ENCODE measurements at regions of chr3 and their contacts with region 1.

Region 1: GRCh38 chr3:61466357-61466756 is 95.0 kb upstream of the PTPRG start:
- DNase-seq: peak in 1 of 2 donors; percentile 41
- ATAC-seq: peak; percentile 71 to 95 (median 90)
- H3K4me3 ChIP-seq: no peak overlapping the region
- H3K27ac ChIP-seq: no peak overlapping the region
- H3K4me1 ChIP-seq: peaks cover 0 to 17% (median 0%) of the 10 kb centered on the region in 9 donors
- H3K27me3 ChIP-seq: no peaks in the 10 kb centered on the region
- CTCF ChIP-seq: no peak

Region 2: GRCh38 chr3:61168301-61168700 is 298.1 kb before region 1 on chr3:
- intact Hi-C with region 1: no loop called
- DNase-seq: no peak
- ATAC-seq: no peak
- H3K4me3 ChIP-seq: no peak overlapping the region
- H3K27ac ChIP-seq: no peak overlapping the region
- H3K4me1 ChIP-seq: peaks cover 0 to 7% (median 0%) of the 10 kb centered on the region in 9 donors
- H3K27me3 ChIP-seq: no peaks in the 10 kb centered on the region
- CTCF ChIP-seq: no peak

Region 3: DNA sequence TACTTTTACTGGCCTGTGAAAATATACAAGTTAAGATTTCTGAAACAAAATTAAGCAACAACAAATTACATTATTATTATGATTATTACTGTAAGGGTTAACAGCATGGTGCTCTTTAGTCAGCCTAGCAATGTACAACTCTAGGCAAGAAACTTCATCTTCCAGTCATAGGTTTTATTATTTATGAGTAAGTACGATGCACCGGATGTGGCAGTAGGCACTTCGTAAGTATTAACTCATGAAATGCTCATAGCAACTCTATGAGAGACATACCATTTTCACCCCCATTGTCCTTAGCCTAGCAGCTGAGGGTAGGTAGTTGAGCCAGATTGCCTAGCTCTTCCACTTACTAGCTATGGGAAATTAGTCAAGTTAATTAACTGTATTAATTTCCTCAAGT is 27.0 kb after region 1 on chr3:
- intact Hi-C with region 1: loop called in 1 of 10 experiments (anchors 2 kb)
- DNase-seq: no peak
- ATAC-seq: no peak
- H3K4me3 ChIP-seq: no peak overlapping the region
- H3K27ac ChIP-seq: no peak overlapping the region
- H3K4me1 ChIP-seq: peaks cover 0 to 5% (median 0%) of the 10 kb centered on the region in 9 donors
- H3K27me3 ChIP-seq: no peaks in the 10 kb centered on the region
- CTCF ChIP-seq: no peak

Region 4: DNA sequence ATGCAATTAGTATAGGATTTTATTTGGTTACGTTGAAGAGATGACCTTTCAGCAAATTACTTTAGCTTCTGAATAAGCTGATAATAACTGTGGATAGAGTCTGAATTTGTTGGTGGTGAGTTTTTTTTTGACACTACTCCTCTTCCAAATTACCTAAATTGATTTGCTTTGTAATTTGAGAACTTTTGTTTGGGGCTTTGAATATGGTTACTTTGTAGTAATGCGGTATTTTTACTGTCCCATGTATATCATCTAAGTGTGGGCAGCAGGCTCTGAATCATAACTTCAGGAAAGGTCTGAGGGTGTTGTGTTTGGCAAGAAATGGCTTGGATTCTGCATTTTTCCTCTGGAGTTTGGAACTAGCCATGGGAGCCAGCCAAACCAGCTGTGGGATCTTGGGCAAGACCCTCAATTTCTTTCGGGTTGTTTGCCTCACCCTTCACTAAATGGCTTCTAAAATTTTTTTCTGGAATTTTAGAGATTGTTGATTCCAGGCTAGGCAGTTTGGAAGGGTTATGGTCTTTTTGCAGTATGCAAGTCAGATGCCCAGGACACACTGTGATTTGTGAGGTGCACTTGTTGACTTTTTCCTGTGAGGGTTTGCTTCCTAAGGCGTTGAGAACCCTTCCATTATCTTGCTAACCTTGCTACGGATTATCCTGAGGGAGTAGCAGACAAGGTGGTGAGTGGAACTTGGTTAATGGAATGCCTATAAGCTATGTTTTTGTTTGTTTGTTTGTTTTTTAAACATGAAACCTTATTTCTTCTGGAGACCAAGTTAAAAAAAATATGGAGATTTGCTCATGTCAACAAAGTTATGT is 105.4 kb after region 1 on chr3:
- intact Hi-C with region 1: no loop called
- DNase-seq: no peak
- ATAC-seq: peak in 4 of 8 donors; percentile 22 to 70 (median 30)
- H3K4me3 ChIP-seq: no peak overlapping the region
- H3K27ac ChIP-seq: peak overlapping the region in 1 of 10 donors; percentile 7
- H3K4me1 ChIP-seq: peaks cover 4 to 83% (median 44%) of the 10 kb centered on the region in 9 donors
- H3K27me3 ChIP-seq: no peaks in the 10 kb centered on the region
- CTCF ChIP-seq: no peak

Measured in heart right ventricle (tissue), 16 donors.